Activated naive CD4-positive, alpha-beta T cell treated with anti-CD3 and anti-CD28 coated beads, Interleukin-2, amount 10 ng/mL, durations not matched to agents 7 days and 5 days (primary cell): ENCODE measurements at regions of chr14 and their contacts with region 1.

Region 1: GRCh38 chr14:55270832-55271565 is at the start of gene FBXO34:
- DNase-seq: peak; percentile 99
- H3K4me3 Mint-ChIP-seq: peak within 1 kb of the TSS; percentile 85
- H3K27ac Mint-ChIP-seq: peak within 1 kb of the TSS; percentile 94
- H3K4me1 Mint-ChIP-seq: peaks cover 39% of the 10 kb centered on the region
- H3K27me3 Mint-ChIP-seq: peaks cover 6% of the 10 kb centered on the region

Region 2: GRCh38 chr14:55136885-55137786 is 133.9 kb before region 1 on chr14:
- CTCF ChIA-PET with region 1: no interaction called
- DNase-seq: no peak
- H3K4me3 Mint-ChIP-seq: no peak overlapping the region
- H3K27ac Mint-ChIP-seq: no peak overlapping the region
- H3K4me1 Mint-ChIP-seq: peaks cover 5% of the 10 kb centered on the region
- H3K27me3 Mint-ChIP-seq: no peaks in the 10 kb centered on the region

Region 3: DNA sequence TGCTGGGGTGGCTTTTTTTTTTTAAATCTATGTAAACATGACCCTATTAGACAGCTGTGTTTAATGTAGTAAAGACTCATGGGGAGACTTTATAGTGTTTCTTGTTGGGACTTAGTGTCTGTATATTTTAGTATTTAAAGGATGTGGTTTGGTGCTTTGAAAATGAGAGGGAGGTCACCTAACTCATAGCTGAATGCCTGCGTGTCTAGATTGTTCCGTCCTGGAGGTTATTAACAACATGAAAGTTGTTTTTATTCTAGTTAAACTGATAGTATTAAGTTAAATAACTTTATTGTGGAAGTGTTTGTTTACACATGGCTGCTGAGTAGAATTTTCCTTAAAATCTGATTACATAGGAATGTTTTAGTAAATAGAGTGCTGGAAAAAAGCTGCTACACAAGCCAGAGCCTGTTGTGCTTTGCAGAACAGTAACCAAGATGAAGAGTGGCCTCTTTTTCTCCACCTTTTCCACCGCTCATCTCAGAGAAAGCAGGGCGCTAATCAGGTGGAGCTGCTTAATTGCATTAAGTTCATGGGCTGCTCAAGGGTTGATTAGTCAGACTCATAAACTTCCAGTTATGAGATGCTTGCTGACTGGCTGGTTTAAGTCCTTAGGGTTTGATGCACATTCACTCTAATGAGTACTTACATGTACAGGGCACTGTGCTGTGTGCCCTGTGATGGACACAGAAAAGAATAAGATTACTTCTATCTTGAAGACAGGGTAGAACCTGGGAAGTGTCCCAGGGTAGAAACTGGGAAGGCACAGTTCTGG is 62.9 kb after region 1 on chr14:
- CTCF ChIA-PET with region 1: interaction called, 11 read pairs
- DNase-seq: no peak
- H3K4me3 Mint-ChIP-seq: peak overlapping the region; percentile 54
- H3K27ac Mint-ChIP-seq: peak overlapping the region; percentile 86
- H3K4me1 Mint-ChIP-seq: peaks cover 81% of the 10 kb centered on the region
- H3K27me3 Mint-ChIP-seq: no peaks in the 10 kb centered on the region